Panc1 (cell line): ENCODE measurements at regions of chr19 and their contacts with region 1.

Region 1: GRCh38 chr19:10120538-10121189 is 965 bp upstream of the EIF3G start:
- DNase-seq: no peak
- ATAC-seq: no peak
- H3K4me3 ChIP-seq: no peak overlapping the region
- H3K27ac ChIP-seq: no peak overlapping the region
- H3K4me1 ChIP-seq: no peaks in the 10 kb centered on the region; the same call in 1 of the 2 replicates
- H3K27me3 ChIP-seq: no peaks in the 10 kb centered on the region
- CTCF ChIP-seq: no peak

Region 2: GRCh38 chr19:10036601-10037071 is 84.0 kb before region 1 on chr19:
- CTCF ChIA-PET with region 1: no interaction called
- POLR2A ChIA-PET with region 1: no interaction called
- in situ Hi-C with region 1: no loop called
- intact Hi-C with region 1: no loop called
- DNase-seq: no peak
- ATAC-seq: no peak
- H3K4me3 ChIP-seq: no peak overlapping the region
- H3K27ac ChIP-seq: no peak overlapping the region
- H3K4me1 ChIP-seq: peaks cover 5% of the 10 kb centered on the region; the same call in 1 of the 2 replicates
- H3K27me3 ChIP-seq: no peaks in the 10 kb centered on the region
- CTCF ChIP-seq: no peak

Region 3: DNA sequence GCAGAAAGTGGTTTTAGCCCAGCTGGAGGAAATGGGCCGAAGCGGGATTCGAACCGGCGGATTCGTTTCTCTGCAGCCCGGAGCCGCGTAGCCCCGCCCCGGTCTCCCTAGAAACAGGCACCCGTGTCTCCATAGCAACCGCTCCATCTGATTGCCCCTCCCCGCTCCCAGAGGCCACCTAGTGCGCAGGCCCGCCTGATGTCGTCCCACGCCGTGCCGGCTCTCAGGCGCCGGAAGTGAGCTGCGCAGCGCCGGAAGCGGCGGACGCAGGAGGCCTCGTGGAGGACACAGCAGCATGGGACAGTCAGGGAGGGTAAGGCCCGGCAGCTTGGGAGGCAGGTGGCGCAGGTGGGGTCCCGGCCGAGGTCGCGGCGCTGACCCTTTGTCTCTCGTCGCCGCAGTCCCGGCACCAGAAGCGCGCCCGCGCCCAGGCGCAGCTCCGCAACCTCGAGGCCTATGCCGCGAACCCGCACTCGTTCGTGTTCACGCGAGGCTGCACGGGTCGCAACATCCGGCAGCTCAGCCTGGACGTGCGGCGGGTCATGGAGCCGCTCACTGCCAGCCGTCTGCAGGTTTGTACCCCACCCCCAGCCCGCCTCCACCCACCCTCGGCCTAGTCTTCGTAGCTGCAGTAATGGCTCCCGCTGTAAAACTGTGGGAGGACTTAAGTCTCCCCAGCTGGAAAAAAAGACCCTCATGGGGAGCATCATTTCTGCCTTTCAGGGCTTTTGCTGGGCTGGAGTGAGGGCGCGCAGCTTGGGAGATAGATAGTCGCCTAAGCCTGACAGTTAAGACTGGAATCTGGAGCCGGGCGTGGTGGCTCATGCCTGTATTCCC is 14.3 kb before region 1 on chr19 and contains the start of gene PPAN:
- CTCF ChIA-PET with region 1: no interaction called
- POLR2A ChIA-PET with region 1: no interaction called
- in situ Hi-C with region 1: no loop called
- intact Hi-C with region 1: no loop called
- DNase-seq: peak; percentile 76
- ATAC-seq: peak; percentile 98
- H3K4me3 ChIP-seq: peak within 1 kb of the TSS; percentile 82 to 94
- H3K27ac ChIP-seq: peak within 1 kb of the TSS; percentile 90
- H3K4me1 ChIP-seq: peaks cover under 1% of the 10 kb centered on the region
- H3K27me3 ChIP-seq: no peaks in the 10 kb centered on the region
- CTCF ChIP-seq: no peak
- total RNA-seq, gene PPAN: 63.3 TPM

Region 4: GRCh38 chr19:10251792-10252694 is 131.4 kb after region 1 on chr19 and contains the start of gene MRPL4:
- CTCF ChIA-PET with region 1: no interaction called
- POLR2A ChIA-PET with region 1: interaction called, 4 read pairs
- in situ Hi-C with region 1: no loop called
- intact Hi-C with region 1: loop called (anchors 5 kb)
- DNase-seq: peak; percentile 90
- ATAC-seq: peak; percentile 99
- H3K4me3 ChIP-seq: peak within 1 kb of the TSS; percentile 79 to 83
- H3K27ac ChIP-seq: peak within 1 kb of the TSS; percentile 84
- H3K4me1 ChIP-seq: no peaks in the 10 kb centered on the region
- H3K27me3 ChIP-seq: no peaks in the 10 kb centered on the region
- CTCF ChIP-seq: no peak
- total RNA-seq, gene MRPL4: 62.8 TPM